ENCODE measurements at regions of chr7 and their contacts with region 1.

Region 1: DNA sequence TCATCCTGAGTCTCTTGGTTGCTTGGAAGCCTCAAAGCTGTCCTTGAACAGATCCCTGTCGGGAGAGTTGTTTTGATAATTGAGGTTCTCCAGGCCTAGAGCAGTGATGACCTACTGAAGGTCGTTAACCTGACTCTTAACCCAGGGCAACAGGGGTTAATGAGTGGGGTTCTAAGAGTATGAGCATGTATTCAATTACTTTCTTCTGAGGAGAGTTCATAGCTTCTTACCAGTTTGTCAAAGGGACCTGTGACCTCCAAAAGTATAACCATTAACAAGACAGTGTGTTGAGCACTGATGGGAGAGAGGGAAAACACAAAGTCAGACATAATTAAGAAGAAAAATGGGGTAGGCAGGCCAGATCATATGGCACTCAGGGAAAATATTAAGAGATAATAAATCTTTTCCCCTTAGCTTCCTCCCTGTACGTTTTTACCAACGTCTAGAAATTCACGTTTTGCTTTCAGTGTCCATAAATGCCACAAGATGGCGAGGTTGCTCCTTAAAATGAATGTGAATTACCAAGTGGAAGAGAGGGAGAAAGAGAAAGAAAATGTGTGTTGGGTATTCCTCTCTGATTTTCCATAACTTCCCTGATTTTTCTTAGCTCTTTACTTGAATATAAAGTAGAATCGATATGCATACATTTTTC is 97.6 kb downstream of the SUGCT start:
- DNase-seq: peak; percentile 55
- H3K4me3 ChIP-seq: no peak overlapping the region
- H3K27ac ChIP-seq: no peak overlapping the region
- H3K4me1 ChIP-seq: no peaks in the 10 kb centered on the region
- H3K27me3 ChIP-seq: no peaks in the 10 kb centered on the region
- CTCF ChIP-seq: peak; percentile 63 to 74

Region 2: DNA sequence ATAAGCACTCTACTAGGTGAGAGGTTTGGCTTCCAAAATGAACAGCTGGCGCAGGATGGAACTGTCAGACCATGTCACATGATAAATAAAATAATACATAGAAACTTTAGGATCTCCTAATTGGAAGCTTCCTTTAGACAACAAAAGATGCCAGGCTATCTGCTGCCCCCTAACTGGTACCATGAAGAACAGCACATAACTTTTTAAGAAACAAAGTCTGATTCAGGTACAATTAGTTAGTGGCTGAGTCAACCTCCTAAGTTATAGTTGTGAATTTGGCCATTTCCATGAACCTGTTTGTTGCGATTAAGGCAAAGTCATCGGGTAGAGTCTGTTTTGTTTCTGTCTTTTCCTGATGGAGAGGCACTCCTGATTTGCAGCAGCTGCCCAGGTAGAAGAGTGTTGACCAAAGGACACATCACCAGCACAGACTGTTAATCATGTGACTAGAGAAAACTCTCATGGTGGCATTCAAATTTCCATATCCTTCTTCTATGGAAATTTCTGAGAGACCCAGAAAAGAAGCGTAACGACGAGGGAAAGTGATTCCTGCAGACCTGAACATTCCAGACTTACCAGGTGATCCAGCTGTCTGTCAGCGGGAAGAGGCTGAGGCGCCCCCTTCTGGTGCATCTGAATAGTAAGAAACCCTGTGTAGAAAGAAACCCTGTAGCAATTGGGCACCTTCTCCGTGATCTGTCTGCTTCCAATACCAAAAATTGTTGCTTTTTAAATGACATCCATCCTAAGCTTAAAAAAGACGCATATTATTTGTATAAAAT is 1479.1 kb after region 1 on chr7:
- CTCF ChIA-PET with region 1: no interaction called
- dilution Hi-C with region 1: loop called (anchors 10 kb)
- in situ Hi-C with region 1: loop called in 1 of 2 experiments (anchors 25 kb)
- intact Hi-C with region 1: loop called (anchors 1 kb)
- DNase-seq: no peak
- H3K4me3 ChIP-seq: no peak overlapping the region
- H3K27ac ChIP-seq: no peak overlapping the region
- H3K4me1 ChIP-seq: no peaks in the 10 kb centered on the region
- H3K27me3 ChIP-seq: no peaks in the 10 kb centered on the region
- CTCF ChIP-seq: peak; percentile 71 to 72

Region 3: GRCh38 chr7:41731492-41732435 is 1499.4 kb after region 1 on chr7:
- CTCF ChIA-PET with region 1: no interaction called
- dilution Hi-C with region 1: no loop called
- in situ Hi-C with region 1: loop called in 1 of 2 experiments (anchors 25 kb)
- intact Hi-C with region 1: loop called (anchors 5 kb)
- DNase-seq: no peak
- H3K4me3 ChIP-seq: no peak overlapping the region
- H3K27ac ChIP-seq: no peak overlapping the region
- H3K4me1 ChIP-seq: no peaks in the 10 kb centered on the region
- H3K27me3 ChIP-seq: no peaks in the 10 kb centered on the region
- CTCF ChIP-seq: peak; percentile 32 to 49

Measured in mammary epithelial cell (primary cell).